Naive thymus-derived CD4-positive, alpha-beta T cell (primary cell): ENCODE measurements at regions of chr12 and their contacts with region 1.

Region 1: GRCh38 chr12:27434673-27435565 is 11.6 kb upstream of the SMCO2 start:
- DNase-seq: peak in 6 of 9 donors; percentile 2 to 28 (median 18)
- ATAC-seq: peak; percentile 74
- H3K4me3 ChIP-seq: no peak overlapping the region
- H3K4me3 Mint-ChIP-seq: peak overlapping the region in 1 of 10 donors; percentile 29
- H3K27ac ChIP-seq: no peak overlapping the region
- H3K27ac Mint-ChIP-seq: peak overlapping the region in 3 of 9 donors; percentile 32 to 81 (median 33)
- H3K4me1 ChIP-seq: no peaks in the 10 kb centered on the region
- H3K4me1 Mint-ChIP-seq: peaks cover 7 to 47% (median 10%) of the 10 kb centered on the region in 7 donors
- H3K27me3 ChIP-seq: no peaks in the 10 kb centered on the region
- H3K27me3 Mint-ChIP-seq: peaks cover 0 to 18% (median 13%) of the 10 kb centered on the region in 5 donors

Region 2: GRCh38 chr12:27424631-27425230 is 10.2 kb before region 1 on chr12:
- CTCF ChIA-PET with region 1: interaction called, 13 read pairs
- POLR2A ChIA-PET with region 1: no interaction called
- intact Hi-C with region 1: no loop called
- DNase-seq: peak in 1 of 9 donors; percentile 8
- ATAC-seq: no peak
- H3K4me3 ChIP-seq: no peak overlapping the region
- H3K4me3 Mint-ChIP-seq: no peak overlapping the region
- H3K27ac ChIP-seq: no peak overlapping the region
- H3K27ac Mint-ChIP-seq: no peak overlapping the region
- H3K4me1 ChIP-seq: no peaks in the 10 kb centered on the region
- H3K4me1 Mint-ChIP-seq: peaks cover 0 to 13% (median 0%) of the 10 kb centered on the region in 7 donors
- H3K27me3 ChIP-seq: no peaks in the 10 kb centered on the region
- H3K27me3 Mint-ChIP-seq: no peaks in the 10 kb centered on the region

Region 3: GRCh38 chr12:27498149-27498548 is 63.2 kb after region 1 on chr12:
- CTCF ChIA-PET with region 1: no interaction called
- POLR2A ChIA-PET with region 1: no interaction called
- intact Hi-C with region 1: loop called in 1 of 2 experiments (anchors 10 kb)
- DNase-seq: no peak
- ATAC-seq: no peak
- H3K4me3 ChIP-seq: no peak overlapping the region
- H3K4me3 Mint-ChIP-seq: peak overlapping the region in 1 of 10 donors; percentile 26
- H3K27ac ChIP-seq: no peak overlapping the region
- H3K27ac Mint-ChIP-seq: peak overlapping the region in 1 of 9 donors; percentile 67
- H3K4me1 ChIP-seq: no peaks in the 10 kb centered on the region
- H3K4me1 Mint-ChIP-seq: peaks cover 0 to 39% (median 11%) of the 10 kb centered on the region in 7 donors
- H3K27me3 ChIP-seq: no peaks in the 10 kb centered on the region
- H3K27me3 Mint-ChIP-seq: peaks cover 0 to 24% (median 10%) of the 10 kb centered on the region in 5 donors

Region 4: DNA sequence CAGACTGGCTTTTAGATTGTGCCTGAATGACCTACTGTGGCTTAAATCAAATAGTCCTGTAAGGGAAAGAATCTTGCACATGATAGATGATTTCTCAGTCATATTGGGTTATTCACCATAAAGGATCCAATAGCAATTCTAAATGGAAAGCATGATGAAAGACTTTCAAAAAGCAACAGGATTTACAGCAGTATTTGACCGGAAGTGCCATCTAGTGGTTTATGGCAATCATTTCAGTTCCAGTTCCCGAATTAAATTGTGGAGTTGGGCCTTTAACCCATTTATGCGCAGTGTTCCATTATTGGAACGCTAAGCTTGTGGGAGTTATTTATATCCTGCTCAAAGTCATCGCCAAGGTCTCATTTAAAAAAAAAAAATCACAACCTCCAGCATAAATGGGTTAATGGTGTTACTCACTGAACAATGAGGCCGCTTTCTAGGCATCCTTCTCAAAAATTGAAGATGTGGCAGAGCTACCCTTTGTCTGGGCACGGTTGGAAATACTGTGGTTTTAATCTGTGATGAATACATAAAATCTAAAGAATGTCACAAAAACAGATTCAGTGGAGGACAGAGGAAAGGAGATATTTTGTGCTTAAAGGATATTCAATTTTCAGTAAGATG is 200.5 kb after region 1 on chr12:
- CTCF ChIA-PET with region 1: interaction called, 6 read pairs
- POLR2A ChIA-PET with region 1: no interaction called
- intact Hi-C with region 1: loop called in 1 of 2 experiments (anchors 1 kb)
- DNase-seq: no peak
- ATAC-seq: no peak
- H3K4me3 ChIP-seq: no peak overlapping the region
- H3K4me3 Mint-ChIP-seq: no peak overlapping the region
- H3K27ac ChIP-seq: no peak overlapping the region
- H3K27ac Mint-ChIP-seq: no peak overlapping the region
- H3K4me1 ChIP-seq: no peaks in the 10 kb centered on the region
- H3K4me1 Mint-ChIP-seq: peaks cover 0 to 7% (median 0%) of the 10 kb centered on the region in 7 donors
- H3K27me3 ChIP-seq: no peaks in the 10 kb centered on the region
- H3K27me3 Mint-ChIP-seq: no peaks in the 10 kb centered on the region

Region 5: GRCh38 chr12:27703710-27704452 is 269.0 kb after region 1 on chr12:
- CTCF ChIA-PET with region 1: interaction called, 19 read pairs
- POLR2A ChIA-PET with region 1: no interaction called
- intact Hi-C with region 1: loop called (anchors 1 kb)
- DNase-seq: peak; percentile 11 to 64 (median 56)
- ATAC-seq: peak; percentile 97
- H3K4me3 ChIP-seq: no peak overlapping the region
- H3K4me3 Mint-ChIP-seq: no peak overlapping the region
- H3K27ac ChIP-seq: no peak overlapping the region
- H3K27ac Mint-ChIP-seq: no peak overlapping the region
- H3K4me1 ChIP-seq: no peaks in the 10 kb centered on the region
- H3K4me1 Mint-ChIP-seq: peaks cover 0 to 3% (median 0%) of the 10 kb centered on the region in 7 donors
- H3K27me3 ChIP-seq: no peaks in the 10 kb centered on the region
- H3K27me3 Mint-ChIP-seq: peaks cover 7 to 22% (median 13%) of the 10 kb centered on the region in 5 donors